MCF 10A (cell line): ENCODE measurements at regions of chr13 and their contacts with region 1.

Region 1: GRCh38 chr13:97432917-97433726 is 847 bp upstream of the RAP2A start:
- DNase-seq: peak; percentile 100
- H3K4me3 Mint-ChIP-seq: peak overlapping the region; percentile 85
- H3K27ac Mint-ChIP-seq: peak overlapping the region; percentile 91
- H3K4me1 Mint-ChIP-seq: peaks cover 28% of the 10 kb centered on the region
- H3K27me3 Mint-ChIP-seq: no peaks in the 10 kb centered on the region
- CTCF ChIP-seq: no peak

Region 2: DNA sequence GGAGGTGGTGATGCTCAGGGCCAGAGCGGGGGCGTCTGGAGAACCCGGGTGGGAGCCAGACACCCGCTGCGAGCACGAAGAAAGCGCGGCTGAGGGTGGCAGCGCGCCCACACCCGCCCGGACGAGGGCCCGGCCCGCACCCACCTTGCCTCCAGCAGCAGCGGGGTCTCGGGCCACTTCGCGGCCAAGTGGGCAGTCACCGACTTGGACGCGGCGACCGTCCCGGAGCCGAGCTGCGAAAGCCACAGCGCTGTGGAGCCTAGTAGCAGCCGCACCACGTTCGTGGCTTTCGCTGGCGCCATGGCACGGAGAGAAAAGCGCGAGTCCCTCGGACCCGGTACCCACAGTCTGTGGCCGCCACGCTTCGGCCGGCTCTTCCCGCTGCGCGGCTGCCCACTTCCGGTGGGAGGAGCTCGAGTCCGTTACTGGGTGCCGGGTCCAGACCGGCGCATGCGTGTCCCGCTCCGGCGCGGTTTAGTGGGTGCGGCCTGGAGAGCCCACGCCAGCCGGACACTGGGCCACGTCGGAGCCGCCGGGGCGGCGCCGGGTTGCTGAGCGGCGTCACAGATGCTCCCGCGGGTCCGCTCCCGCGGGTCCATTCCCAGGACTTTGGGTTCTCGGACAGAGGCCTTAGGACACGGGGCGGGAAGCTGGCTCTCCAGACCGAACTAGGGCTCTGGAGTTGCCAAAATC is 1380.0 kb before region 1 on chr13 and contains the start of gene UGGT2:
- CTCF ChIA-PET with region 1: no interaction called
- POLR2A ChIA-PET with region 1: interaction called, 16 read pairs
- intact Hi-C with region 1: no loop called
- DNase-seq: peak; percentile 97
- H3K4me3 Mint-ChIP-seq: peak within 1 kb of the TSS; percentile 95
- H3K27ac Mint-ChIP-seq: peak within 1 kb of the TSS; percentile 92
- H3K4me1 Mint-ChIP-seq: peaks cover 23% of the 10 kb centered on the region
- H3K27me3 Mint-ChIP-seq: no peaks in the 10 kb centered on the region
- CTCF ChIP-seq: no peak
- total RNA-seq, gene UGGT2: 54.0 and 57.1 TPM in 2 replicates

Region 3: GRCh38 chr13:97275265-97275664 is 157.9 kb before region 1 on chr13:
- CTCF ChIA-PET with region 1: no interaction called
- POLR2A ChIA-PET with region 1: interaction called, 12 read pairs
- intact Hi-C with region 1: no loop called
- DNase-seq: peak; percentile 95
- H3K4me3 Mint-ChIP-seq: peak overlapping the region; percentile 11
- H3K27ac Mint-ChIP-seq: peak overlapping the region; percentile 92
- H3K4me1 Mint-ChIP-seq: peaks cover 65% of the 10 kb centered on the region
- H3K27me3 Mint-ChIP-seq: no peaks in the 10 kb centered on the region
- CTCF ChIP-seq: no peak

Region 4: DNA sequence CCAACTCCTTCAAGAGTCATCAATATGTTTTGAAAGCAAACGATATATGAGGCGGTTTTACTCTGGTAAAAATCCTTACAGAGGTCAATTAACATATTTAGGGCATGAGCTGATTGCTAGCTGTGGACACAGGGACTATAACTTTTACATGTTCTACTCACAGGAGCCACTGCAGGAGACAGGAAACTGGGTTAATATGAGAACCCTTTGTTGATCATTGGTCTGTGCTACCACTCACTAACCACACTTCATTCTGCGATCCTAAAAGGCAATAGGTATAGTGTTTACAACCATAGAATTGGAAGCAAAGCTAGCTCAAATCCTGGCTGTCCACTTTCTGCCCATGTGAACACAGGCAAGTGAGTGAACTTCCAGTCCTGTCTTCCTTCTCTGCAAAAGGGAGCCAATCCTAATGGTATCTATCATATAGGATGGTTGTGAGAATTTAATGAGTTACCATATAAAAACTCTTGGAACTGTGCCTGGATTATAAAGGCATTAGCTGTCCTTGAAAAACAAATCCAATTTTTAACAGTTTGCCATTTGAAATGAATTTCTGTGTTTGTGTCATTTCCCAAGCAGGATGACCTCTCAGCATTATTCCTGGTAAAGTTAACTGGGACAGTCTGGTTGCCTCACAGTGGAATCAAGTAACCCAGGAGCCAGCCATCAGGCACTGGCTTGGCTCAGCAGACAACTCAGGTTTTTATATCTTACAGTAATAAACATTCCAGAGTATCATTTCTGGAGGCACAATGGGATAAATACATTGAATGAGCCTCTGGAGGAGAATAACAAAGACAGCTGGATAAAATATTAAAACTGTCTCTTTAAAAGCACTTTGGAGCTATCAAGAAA is 29.0 kb before region 1 on chr13:
- CTCF ChIA-PET with region 1: interaction called, 7 read pairs
- POLR2A ChIA-PET with region 1: interaction called, 12 read pairs
- intact Hi-C with region 1: no loop called
- DNase-seq: no peak
- H3K4me3 Mint-ChIP-seq: no peak overlapping the region
- H3K27ac Mint-ChIP-seq: no peak overlapping the region
- H3K4me1 Mint-ChIP-seq: no peaks in the 10 kb centered on the region
- H3K27me3 Mint-ChIP-seq: no peaks in the 10 kb centered on the region
- CTCF ChIP-seq: no peak

Region 5: GRCh38 chr13:97749174-97749573 is 316.1 kb after region 1 on chr13:
- CTCF ChIA-PET with region 1: interaction called, 6 read pairs
- POLR2A ChIA-PET with region 1: interaction called, 3 read pairs
- intact Hi-C with region 1: loop called (anchors 1 kb)
- DNase-seq: peak; percentile 93
- H3K4me3 Mint-ChIP-seq: no peak overlapping the region
- H3K27ac Mint-ChIP-seq: no peak overlapping the region
- H3K4me1 Mint-ChIP-seq: peaks cover 19% of the 10 kb centered on the region
- H3K27me3 Mint-ChIP-seq: no peaks in the 10 kb centered on the region
- CTCF ChIP-seq: peak; percentile 44